ENCODE measurements at regions of chr15 and their contacts with region 1.

Region 1: DNA sequence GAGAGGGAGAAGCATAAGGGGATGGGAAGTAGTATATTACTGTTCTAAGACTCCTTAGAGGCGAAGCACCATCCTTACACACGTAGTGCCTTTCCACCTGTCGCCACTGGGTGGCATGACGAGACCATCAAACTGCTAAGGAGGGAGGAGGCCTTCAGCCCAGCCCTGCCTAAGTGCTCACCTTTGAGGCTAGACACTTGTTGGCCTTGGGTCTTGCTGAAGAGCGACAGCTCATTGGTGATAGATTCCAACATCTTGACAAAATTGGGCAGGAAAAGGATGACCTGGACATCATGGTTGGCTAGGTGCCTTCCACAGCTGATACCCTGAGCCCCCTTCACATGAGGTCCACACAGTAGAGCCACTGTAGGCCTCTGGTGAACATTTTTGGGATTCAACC is 19.6 kb downstream of the CLK3 start:
- DNase-seq: peak; percentile 87
- ATAC-seq: peak; percentile 90
- H3K4me3 Mint-ChIP-seq: no peak overlapping the region
- H3K27ac Mint-ChIP-seq: no peak overlapping the region
- H3K4me1 Mint-ChIP-seq: no peaks in the 10 kb centered on the region
- H3K27me3 Mint-ChIP-seq: no peaks in the 10 kb centered on the region

Region 2: DNA sequence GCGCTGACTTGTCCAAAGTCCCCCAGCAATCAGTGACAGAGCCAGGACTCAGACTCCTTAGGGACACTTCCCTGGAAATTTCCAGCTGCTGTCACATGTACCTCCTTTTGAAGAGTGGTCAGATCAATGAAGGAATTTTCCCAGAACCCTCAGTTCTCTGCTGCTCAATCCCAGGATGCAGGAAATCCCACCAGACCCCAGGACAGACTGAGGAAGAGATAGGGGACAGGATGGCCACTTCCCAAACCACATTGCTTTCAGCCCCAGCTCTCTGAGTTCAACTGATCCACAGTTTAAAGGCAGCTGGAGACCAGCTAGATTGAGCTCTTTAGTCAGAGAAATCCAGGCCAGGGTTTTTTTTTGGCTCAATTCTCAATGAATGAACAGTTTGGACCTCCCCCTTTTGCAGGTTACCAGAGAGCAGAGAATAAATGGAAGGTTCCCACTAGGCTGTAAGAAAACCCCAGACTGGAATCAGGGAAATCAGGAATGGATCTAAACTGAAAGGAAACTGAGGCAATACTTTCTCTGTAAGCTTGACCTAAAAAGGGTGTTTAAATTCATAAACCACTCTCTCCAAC is 88.6 kb after region 1 on chr15:
- CTCF ChIA-PET with region 1: interaction called, 12 read pairs
- POLR2A ChIA-PET with region 1: no interaction called
- intact Hi-C with region 1: no loop called
- DNase-seq: no peak
- ATAC-seq: peak; percentile 51
- H3K4me3 Mint-ChIP-seq: no peak overlapping the region
- H3K27ac Mint-ChIP-seq: no peak overlapping the region
- H3K4me1 Mint-ChIP-seq: peaks cover 13% of the 10 kb centered on the region
- H3K27me3 Mint-ChIP-seq: peaks cover 9% of the 10 kb centered on the region

Region 3: DNA sequence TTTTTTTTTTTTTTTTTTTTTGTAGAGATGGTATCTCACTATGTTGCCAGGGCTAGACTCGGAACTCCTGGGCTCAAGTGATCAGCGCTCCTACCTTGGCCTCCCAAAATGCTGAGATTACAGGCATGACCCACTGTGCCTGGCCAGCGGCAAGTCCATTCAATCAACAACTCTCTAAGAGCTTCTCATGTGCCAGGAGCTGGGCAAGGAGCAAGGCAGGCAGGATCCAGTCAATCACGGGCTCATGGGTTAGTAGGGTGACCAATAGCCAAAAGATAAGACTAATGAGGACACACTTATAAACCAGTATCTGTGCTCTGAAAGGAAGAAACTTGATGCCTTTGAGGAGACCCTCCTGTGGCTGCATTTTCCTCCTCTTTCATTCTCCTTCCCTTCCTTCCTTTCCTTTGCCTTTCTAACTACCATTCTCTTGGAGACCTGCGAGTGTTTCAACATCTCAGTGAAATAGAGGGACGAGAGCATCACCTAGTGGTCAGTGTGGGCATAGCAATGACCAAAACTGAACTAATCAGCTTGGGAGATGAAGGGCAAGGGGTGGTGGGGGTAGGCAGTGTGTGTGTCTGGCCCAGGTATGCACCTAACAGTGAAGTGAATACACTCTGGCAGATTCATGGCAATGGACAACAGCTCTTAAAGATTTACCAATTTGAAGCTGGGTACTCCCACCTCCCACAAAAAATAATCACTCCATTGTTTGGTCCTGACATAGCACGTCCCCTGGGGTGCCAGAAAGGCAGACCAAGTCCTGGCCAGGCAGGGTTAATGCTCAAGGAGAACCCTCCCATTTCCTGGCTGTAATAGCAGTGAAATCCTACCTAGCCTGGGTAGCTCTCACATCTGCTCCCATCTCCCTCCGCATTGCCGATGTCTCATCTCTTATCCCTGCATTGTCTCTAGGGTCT is 315.1 kb after region 1 on chr15:
- CTCF ChIA-PET with region 1: interaction called, 8 read pairs
- POLR2A ChIA-PET with region 1: no interaction called
- intact Hi-C with region 1: loop called (anchors 1 to 10 kb)
- DNase-seq: peak; percentile 87
- ATAC-seq: peak; percentile 87
- H3K4me3 Mint-ChIP-seq: no peak overlapping the region
- H3K27ac Mint-ChIP-seq: no peak overlapping the region
- H3K4me1 Mint-ChIP-seq: peaks cover 7% of the 10 kb centered on the region
- H3K27me3 Mint-ChIP-seq: no peaks in the 10 kb centered on the region